B cell (primary cell): ENCODE measurements at regions of chr15 and their contacts with region 1.

Region 1: DNA sequence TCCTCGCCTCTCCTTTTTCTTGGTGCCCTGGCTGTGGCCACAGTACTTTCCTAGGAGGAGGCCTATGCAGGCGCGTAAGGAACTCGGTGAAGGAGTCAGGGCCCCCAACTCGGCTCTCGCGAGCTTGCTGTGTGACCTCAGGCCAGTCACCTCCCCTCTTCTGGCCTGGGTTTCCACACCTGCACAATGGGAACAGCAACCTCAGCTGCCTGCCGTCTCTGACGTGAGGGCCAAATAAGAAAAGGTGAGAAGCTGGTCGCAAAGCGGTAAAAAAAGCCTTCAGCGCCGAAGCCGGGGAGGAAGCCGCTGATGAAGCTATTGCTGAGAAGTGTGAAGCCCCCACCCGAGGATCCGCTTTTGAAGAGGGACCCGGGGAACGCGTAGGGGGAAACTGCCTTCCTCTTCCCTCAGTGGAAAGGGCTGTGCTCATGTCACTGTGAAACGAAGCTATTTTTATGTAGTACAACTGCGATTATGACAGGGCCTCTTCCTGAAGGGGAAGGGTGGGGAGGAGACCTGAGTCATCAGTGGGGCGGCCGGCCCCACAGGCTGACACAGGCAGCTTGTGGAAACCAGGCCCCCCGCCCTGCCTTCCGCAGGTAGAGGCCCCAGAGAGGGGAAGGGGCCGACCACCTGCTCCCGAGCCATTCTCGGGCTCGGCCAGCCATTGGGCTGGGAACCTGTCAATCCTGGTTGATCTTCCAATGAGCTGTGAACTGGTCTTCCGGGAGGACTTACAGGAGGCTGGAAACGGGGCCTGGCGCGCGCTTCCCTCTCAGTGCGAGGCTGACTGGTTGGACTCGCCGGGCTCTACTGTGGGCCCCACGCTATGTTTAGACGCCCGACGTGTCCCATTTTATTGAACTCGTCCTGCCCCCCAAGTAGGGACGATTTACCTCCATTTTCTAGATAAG is 18.0 kb upstream of the ANKDD1A start:
- DNase-seq: peak; percentile 96
- ATAC-seq: peak; percentile 77
- H3K4me3 ChIP-seq: peak overlapping the region; percentile 32 to 71 (median 37)
- H3K4me3 Mint-ChIP-seq: peak overlapping the region; percentile 90
- H3K27ac ChIP-seq: peak overlapping the region; percentile 86 to 94
- H3K27ac Mint-ChIP-seq: peak overlapping the region; percentile 99
- H3K4me1 ChIP-seq: peaks cover 50 to 65% of the 10 kb centered on the region in 2 donors
- H3K4me1 Mint-ChIP-seq: peaks cover 68% of the 10 kb centered on the region
- H3K27me3 ChIP-seq: no peaks in the 10 kb centered on the region
- H3K27me3 Mint-ChIP-seq: no peaks in the 10 kb centered on the region
- CTCF ChIP-seq: no peak

Region 2: GRCh38 chr15:64702816-64703646 is 190.7 kb before region 1 on chr15:
- CTCF ChIA-PET with region 1: interaction called, 3 read pairs
- POLR2A ChIA-PET with region 1: no interaction called
- intact Hi-C with region 1: loop called (anchors 2 kb)
- DNase-seq: peak; percentile 93
- ATAC-seq: peak; percentile 96
- H3K4me3 ChIP-seq: peak overlapping the region; percentile 73 to 88 (median 87)
- H3K4me3 Mint-ChIP-seq: peak overlapping the region; percentile 95
- H3K27ac ChIP-seq: peak overlapping the region; percentile 65 to 83
- H3K27ac Mint-ChIP-seq: peak overlapping the region; percentile 94
- H3K4me1 ChIP-seq: peaks cover 45 to 46% of the 10 kb centered on the region in 2 donors
- H3K4me1 Mint-ChIP-seq: peaks cover 56% of the 10 kb centered on the region
- H3K27me3 ChIP-seq: no peaks in the 10 kb centered on the region
- H3K27me3 Mint-ChIP-seq: no peaks in the 10 kb centered on the region
- CTCF ChIP-seq: no peak

Region 3: GRCh38 chr15:64754663-64755426 is 138.9 kb before region 1 on chr15:
- CTCF ChIA-PET with region 1: interaction called, 3 read pairs
- POLR2A ChIA-PET with region 1: no interaction called
- intact Hi-C with region 1: loop called (anchors 2 kb)
- DNase-seq: peak; percentile 61
- ATAC-seq: peak; percentile 87
- H3K4me3 ChIP-seq: peak overlapping the region in 4 of 5 experiments; percentile 0 to 51 (median 30)
- H3K4me3 Mint-ChIP-seq: peak overlapping the region; percentile 87
- H3K27ac ChIP-seq: peak overlapping the region; percentile 17 to 65
- H3K27ac Mint-ChIP-seq: peak overlapping the region; percentile 79
- H3K4me1 ChIP-seq: peaks cover 34 to 43% of the 10 kb centered on the region in 2 donors
- H3K4me1 Mint-ChIP-seq: peaks cover 51% of the 10 kb centered on the region
- H3K27me3 ChIP-seq: no peaks in the 10 kb centered on the region
- H3K27me3 Mint-ChIP-seq: no peaks in the 10 kb centered on the region
- CTCF ChIP-seq: no peak

Region 4: GRCh38 chr15:64836023-64836536 is 57.7 kb before region 1 on chr15:
- CTCF ChIA-PET with region 1: interaction called, 81 read pairs
- POLR2A ChIA-PET with region 1: interaction called, 32 read pairs
- intact Hi-C with region 1: loop called (anchors 1 kb)
- DNase-seq: no peak
- ATAC-seq: no peak
- H3K4me3 ChIP-seq: no peak overlapping the region
- H3K4me3 Mint-ChIP-seq: peak overlapping the region; percentile 71
- H3K27ac ChIP-seq: no peak overlapping the region
- H3K27ac Mint-ChIP-seq: peak overlapping the region; percentile 69
- H3K4me1 ChIP-seq: peaks cover 10 to 18% of the 10 kb centered on the region in 2 donors
- H3K4me1 Mint-ChIP-seq: peaks cover 27% of the 10 kb centered on the region
- H3K27me3 ChIP-seq: no peaks in the 10 kb centered on the region
- H3K27me3 Mint-ChIP-seq: no peaks in the 10 kb centered on the region
- CTCF ChIP-seq: peak; percentile 62

Region 5: DNA sequence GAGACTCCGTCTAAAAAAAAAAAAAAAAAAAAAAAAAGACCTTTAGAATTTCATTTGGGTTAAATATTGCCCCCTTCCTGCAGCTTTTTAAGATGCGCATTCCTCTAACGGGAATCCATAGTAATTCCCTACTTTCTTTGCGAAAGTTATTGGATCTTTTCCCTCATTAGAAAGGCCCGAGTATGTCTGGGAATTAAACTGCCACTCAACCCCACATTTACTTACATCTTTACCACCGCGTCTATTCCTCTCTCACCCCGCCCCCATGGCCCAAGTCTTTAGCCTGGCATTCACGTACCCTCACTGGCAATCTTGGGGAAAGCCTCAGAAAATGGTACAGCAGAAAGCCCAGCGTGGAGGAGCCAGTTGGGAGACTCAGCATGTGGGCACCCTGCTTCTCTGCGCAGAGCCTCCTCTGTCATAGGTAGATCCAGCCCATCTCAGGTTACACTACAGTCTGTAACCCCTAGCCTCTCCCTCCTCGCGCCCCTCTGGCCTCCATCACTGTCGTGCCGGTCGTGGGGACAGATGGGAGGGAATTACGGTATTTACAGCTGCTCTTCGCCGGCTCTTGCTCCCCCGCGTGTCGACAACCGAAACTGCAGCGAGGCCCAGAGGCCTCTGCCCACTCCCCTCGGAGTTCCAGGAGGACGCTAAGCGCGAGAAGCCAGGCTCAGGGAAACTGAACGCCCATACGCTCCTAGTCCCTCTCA is 11.5 kb after region 1 on chr15:
- CTCF ChIA-PET with region 1: interaction called, 35 read pairs
- POLR2A ChIA-PET with region 1: interaction called, 5 read pairs
- intact Hi-C with region 1: loop called (anchors 1 kb)
- DNase-seq: peak; percentile 85
- ATAC-seq: peak; percentile 95
- H3K4me3 ChIP-seq: peak overlapping the region; percentile 19 to 61 (median 44)
- H3K4me3 Mint-ChIP-seq: peak overlapping the region; percentile 84
- H3K27ac ChIP-seq: no peak overlapping the region
- H3K27ac Mint-ChIP-seq: peak overlapping the region; percentile 77
- H3K4me1 ChIP-seq: peaks cover 21 to 24% of the 10 kb centered on the region in 2 donors
- H3K4me1 Mint-ChIP-seq: peaks cover 36% of the 10 kb centered on the region
- H3K27me3 ChIP-seq: peaks cover 0 to 7% (median 0%) of the 10 kb centered on the region in 4 experiments
- H3K27me3 Mint-ChIP-seq: peaks cover 4% of the 10 kb centered on the region
- CTCF ChIP-seq: peak; percentile 86

Region 6: DNA sequence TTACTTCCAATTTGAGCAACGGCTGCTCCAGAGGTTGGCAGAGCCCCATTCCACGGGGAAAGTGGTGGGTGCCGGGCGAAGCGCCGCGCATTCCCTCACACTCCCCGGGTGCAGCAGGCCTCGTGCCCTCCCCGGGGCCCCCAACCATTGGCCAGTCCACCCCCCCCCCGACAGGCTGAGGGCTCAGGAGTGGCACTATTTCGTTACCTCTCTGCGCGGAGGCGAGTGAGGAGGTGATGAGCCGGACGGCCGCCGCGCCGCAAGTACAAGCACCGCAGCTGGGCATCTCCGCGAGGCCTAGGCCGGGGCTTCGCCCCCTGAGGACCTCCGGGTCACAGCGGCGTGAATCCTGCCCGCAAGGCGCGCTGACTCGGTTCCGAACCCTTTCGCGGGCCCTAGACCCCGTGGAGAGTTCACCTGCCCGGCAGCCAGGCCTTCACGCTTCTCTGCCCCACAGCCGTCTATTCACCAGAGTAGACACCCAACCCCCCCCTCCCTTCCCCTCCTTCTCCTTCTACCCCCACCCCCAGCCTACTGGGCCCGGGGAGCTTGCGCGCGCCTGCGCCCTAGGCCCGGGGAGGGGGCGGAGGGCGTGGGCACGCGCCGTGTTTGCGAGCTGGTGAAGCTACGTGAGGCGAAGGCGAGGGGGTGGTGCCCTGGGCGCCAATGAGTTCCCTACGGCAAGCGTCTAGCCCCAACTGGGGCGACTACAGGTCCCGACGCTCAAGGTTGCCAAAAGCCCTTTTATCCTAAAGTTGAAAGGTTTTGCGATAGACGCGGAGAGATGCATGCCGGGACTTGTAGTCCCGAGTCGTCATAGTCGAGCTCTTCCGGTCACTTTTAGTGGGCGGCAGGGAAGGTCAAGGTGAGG is 291.4 kb after region 1 on chr15 and contains the start of gene CLPX:
- CTCF ChIA-PET with region 1: no interaction called
- POLR2A ChIA-PET with region 1: interaction called, 3 read pairs
- intact Hi-C with region 1: loop called (anchors 10 kb)
- DNase-seq: peak; percentile 96
- ATAC-seq: peak; percentile 89
- H3K4me3 ChIP-seq: peak within 1 kb of the TSS; percentile 58 to 94 (median 88)
- H3K4me3 Mint-ChIP-seq: peak within 1 kb of the TSS; percentile 96
- H3K27ac ChIP-seq: peak within 1 kb of the TSS; percentile 74 to 88
- H3K27ac Mint-ChIP-seq: peak within 1 kb of the TSS; percentile 97
- H3K4me1 ChIP-seq: peaks cover 17 to 20% of the 10 kb centered on the region in 2 donors
- H3K4me1 Mint-ChIP-seq: peaks cover 26% of the 10 kb centered on the region
- H3K27me3 ChIP-seq: no peaks in the 10 kb centered on the region
- H3K27me3 Mint-ChIP-seq: no peaks in the 10 kb centered on the region
- CTCF ChIP-seq: no peak
- total RNA-seq, gene CLPX: 54.5 and 63.1 TPM in 2 replicates